Psoas muscle (tissue), 8 donors: ENCODE measurements at regions of chr6 and their contacts with region 1.

Region 1: GRCh38 chr6:72748759-72749158 is 126.9 kb downstream of the KCNQ5 start:
- DNase-seq: no peak
- ATAC-seq: no peak
- H3K4me3 ChIP-seq: no peak overlapping the region
- H3K27ac ChIP-seq: peak overlapping the region; percentile 3
- H3K4me1 ChIP-seq: peaks cover 25% of the 10 kb centered on the region
- H3K27me3 ChIP-seq: no peaks in the 10 kb centered on the region
- CTCF ChIP-seq: no peak

Region 2: DNA sequence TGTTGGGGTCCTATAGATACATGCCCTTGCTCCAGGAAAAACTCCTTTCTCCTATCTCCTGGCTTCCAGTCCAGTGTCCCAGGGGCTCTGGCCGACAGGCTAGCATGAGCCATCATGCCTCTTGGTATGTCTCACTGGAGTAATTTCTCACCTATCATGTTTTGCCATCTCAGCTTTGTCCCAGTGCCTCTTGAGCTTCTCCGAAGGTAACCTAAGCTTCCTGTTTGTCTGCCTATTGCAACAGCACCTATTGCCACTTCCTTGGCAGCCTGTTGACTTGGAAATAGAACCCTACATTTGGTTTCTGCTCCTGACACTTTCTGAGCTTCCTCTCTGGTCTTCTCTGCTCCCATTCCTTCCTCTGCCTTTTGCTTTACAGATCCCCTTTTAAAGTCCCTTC is 70.8 kb after region 1 on chr6:
- intact Hi-C with region 1: loop called in 1 of 2 experiments (anchors 5 kb)
- DNase-seq: peak; percentile 21 to 74
- ATAC-seq: peak; percentile 94 to 98 (median 97)
- H3K4me3 ChIP-seq: no peak overlapping the region
- H3K27ac ChIP-seq: peak overlapping the region; percentile 89
- H3K4me1 ChIP-seq: peaks cover 68% of the 10 kb centered on the region
- H3K27me3 ChIP-seq: no peaks in the 10 kb centered on the region
- CTCF ChIP-seq: no peak

Region 3: GRCh38 chr6:72931325-72931887 is 182.6 kb after region 1 on chr6:
- intact Hi-C with region 1: no loop called
- DNase-seq: no peak
- ATAC-seq: peak in 3 of 4 donors; percentile 25 to 37 (median 33)
- H3K4me3 ChIP-seq: no peak overlapping the region
- H3K27ac ChIP-seq: peak overlapping the region; percentile 27
- H3K4me1 ChIP-seq: peaks cover 39% of the 10 kb centered on the region
- H3K27me3 ChIP-seq: no peaks in the 10 kb centered on the region
- CTCF ChIP-seq: no peak

Region 4: DNA sequence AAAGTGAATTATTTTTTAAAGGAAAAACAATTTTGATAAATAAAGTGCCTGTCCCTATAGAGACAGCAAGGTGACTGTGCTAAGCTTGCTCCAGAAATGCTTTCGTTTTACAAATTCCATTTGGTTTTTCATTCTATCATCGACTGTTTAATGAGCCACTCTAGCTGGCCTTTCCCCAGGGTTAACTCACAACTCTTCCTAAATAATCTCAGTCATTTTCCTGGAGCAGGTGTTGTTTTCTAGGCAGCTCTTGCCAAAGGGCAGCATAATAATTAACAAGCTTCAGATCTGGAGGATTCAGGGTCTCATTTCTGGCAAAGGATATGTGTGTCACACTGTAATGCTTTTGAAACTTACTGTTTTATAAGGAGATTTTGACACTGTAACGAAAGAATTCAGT is 292.3 kb after region 1 on chr6:
- intact Hi-C with region 1: no loop called
- DNase-seq: no peak
- ATAC-seq: peak in 1 of 4 donors; percentile 15
- H3K4me3 ChIP-seq: no peak overlapping the region
- H3K27ac ChIP-seq: peak overlapping the region; percentile 14
- H3K4me1 ChIP-seq: peaks cover 36% of the 10 kb centered on the region
- H3K27me3 ChIP-seq: no peaks in the 10 kb centered on the region
- CTCF ChIP-seq: no peak